CD4-positive, alpha-beta memory T cell (primary cell): ENCODE measurements at regions of chr4 and their contacts with region 1.

Region 1: DNA sequence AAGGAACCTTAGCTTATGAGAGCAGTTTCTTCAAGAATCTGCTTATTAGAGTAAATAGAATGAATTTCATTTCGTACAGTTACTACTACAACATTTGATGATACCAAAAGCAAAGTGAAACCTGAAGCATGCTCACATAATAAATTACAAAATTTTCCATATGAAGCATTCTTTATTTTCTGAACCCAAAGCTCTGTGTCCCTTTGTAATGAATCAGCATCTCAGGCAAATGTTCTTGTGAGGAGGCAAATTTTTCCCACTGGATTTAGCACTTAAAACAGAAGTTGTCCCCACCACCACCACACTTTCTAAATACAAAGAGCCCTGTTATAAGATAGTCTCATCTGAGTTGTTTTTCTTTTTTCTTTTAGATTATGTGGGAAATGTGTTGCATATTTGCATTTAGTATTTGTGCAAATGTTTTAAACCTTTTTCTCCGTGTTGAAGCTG is 70.7 kb upstream of the NFKB1 start:
- DNase-seq: no peak
- H3K4me3 ChIP-seq: peak overlapping the region; percentile 53 to 63
- H3K4me3 Mint-ChIP-seq: peak overlapping the region; percentile 85 to 92 (median 90)
- H3K27ac ChIP-seq: peak overlapping the region; percentile 49
- H3K27ac Mint-ChIP-seq: peak overlapping the region in 6 of 7 donors; percentile 77 to 95 (median 90)
- H3K4me1 ChIP-seq: peaks cover 5% of the 10 kb centered on the region
- H3K4me1 Mint-ChIP-seq: peaks cover 3 to 7% (median 4%) of the 10 kb centered on the region in 4 donors
- H3K27me3 ChIP-seq: no peaks in the 10 kb centered on the region
- H3K27me3 Mint-ChIP-seq: no peaks in the 10 kb centered on the region

Region 2: DNA sequence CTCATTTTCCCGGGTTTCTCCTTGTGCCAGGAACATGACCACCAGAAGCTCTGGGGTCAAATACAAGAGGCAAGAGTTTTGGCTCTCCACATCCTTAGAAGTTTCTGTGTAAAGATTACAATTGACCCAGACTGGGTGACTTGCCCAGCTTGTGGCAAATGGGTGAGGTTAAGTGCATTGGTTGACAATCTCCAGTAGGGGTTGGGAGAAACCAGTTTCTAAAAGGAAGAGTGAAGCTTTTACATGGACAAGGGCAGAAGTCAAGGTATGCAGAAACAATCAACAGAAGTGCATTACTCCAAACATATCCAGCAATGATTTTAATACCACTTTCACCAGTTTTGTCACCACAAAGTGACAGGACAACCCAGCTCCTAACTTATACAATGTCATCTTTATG is 175.0 kb before region 1 on chr4:
- CTCF ChIA-PET with region 1: interaction called, 4 read pairs
- POLR2A ChIA-PET with region 1: no interaction called
- intact Hi-C with region 1: loop called (anchors 1 kb)
- DNase-seq: no peak
- H3K4me3 ChIP-seq: no peak overlapping the region
- H3K4me3 Mint-ChIP-seq: no peak overlapping the region
- H3K27ac ChIP-seq: no peak overlapping the region
- H3K27ac Mint-ChIP-seq: no peak overlapping the region
- H3K4me1 ChIP-seq: no peaks in the 10 kb centered on the region
- H3K4me1 Mint-ChIP-seq: no peaks in the 10 kb centered on the region
- H3K27me3 ChIP-seq: no peaks in the 10 kb centered on the region
- H3K27me3 Mint-ChIP-seq: no peaks in the 10 kb centered on the region

Region 3: DNA sequence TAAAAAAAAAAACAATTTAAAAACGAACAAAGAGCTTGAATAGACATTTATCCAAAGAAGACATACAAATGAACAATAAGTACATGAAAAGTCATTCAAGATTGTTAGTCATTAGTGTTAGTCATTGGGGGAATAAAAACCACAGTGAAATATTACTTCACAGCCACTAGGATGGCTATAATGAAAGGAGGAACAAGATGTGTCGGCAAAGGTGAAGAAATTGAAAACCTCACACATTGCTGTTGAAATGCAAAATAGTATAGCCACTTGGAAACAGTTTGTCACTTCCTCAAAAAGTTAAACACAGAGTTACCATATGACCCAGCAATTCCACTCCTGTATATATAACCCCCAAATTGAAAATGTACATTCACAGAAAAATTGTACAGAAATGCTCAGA is 40.0 kb before region 1 on chr4:
- CTCF ChIA-PET with region 1: no interaction called
- POLR2A ChIA-PET with region 1: no interaction called
- intact Hi-C with region 1: no loop called
- DNase-seq: no peak
- H3K4me3 ChIP-seq: no peak overlapping the region
- H3K4me3 Mint-ChIP-seq: no peak overlapping the region
- H3K27ac ChIP-seq: no peak overlapping the region
- H3K27ac Mint-ChIP-seq: no peak overlapping the region
- H3K4me1 ChIP-seq: no peaks in the 10 kb centered on the region
- H3K4me1 Mint-ChIP-seq: no peaks in the 10 kb centered on the region
- H3K27me3 ChIP-seq: no peaks in the 10 kb centered on the region
- H3K27me3 Mint-ChIP-seq: peaks cover 8 to 15% of the 10 kb centered on the region in 2 donors

Region 4: GRCh38 chr4:102416223-102416622 is 14.3 kb before region 1 on chr4:
- CTCF ChIA-PET with region 1: interaction called, 10 read pairs
- POLR2A ChIA-PET with region 1: no interaction called
- intact Hi-C with region 1: no loop called
- DNase-seq: no peak
- H3K4me3 ChIP-seq: no peak overlapping the region
- H3K4me3 Mint-ChIP-seq: no peak overlapping the region
- H3K27ac ChIP-seq: no peak overlapping the region
- H3K27ac Mint-ChIP-seq: no peak overlapping the region
- H3K4me1 ChIP-seq: no peaks in the 10 kb centered on the region
- H3K4me1 Mint-ChIP-seq: no peaks in the 10 kb centered on the region
- H3K27me3 ChIP-seq: no peaks in the 10 kb centered on the region
- H3K27me3 Mint-ChIP-seq: no peaks in the 10 kb centered on the region

Region 5: DNA sequence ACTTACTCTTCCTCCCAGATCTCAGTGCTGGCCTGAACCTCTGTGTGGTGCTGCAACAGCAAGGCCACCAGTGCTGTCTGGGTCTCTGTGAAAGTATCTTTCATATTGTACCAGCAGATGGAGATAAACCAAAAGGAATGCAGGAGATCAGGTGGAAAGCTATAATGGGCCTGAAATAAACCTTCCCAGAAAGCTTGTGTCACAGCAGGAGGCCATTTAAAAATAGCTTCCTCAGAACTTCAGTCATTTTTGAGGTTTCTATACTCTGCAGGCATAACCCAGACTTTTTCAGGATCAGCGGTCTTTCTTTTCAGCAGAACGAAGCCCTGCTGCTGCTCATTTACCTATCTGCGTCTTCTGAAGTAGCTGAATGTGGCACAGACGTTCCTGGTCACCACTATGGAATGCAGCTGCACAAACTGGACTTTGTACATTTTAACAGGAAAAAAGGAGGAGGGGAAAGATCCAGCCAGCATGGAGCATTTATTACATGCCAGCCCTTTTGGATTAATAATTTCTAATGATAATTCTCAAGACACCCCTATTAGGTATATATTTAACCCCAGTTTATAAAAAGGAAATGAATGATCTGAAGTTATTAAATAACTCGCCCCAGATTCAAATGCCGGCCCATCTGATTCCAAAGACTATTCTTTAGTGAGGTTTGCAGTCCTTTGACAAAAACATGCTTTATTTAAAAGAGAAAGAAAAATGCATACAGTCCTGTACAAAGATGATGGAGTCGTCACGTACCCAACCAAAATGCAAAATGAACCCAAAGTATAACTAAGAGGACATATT is 190.4 kb after region 1 on chr4:
- CTCF ChIA-PET with region 1: interaction called, 19 read pairs
- POLR2A ChIA-PET with region 1: no interaction called
- intact Hi-C with region 1: loop called (anchors 1 kb)
- DNase-seq: peak in 2 of 5 donors; percentile 27 to 35
- H3K4me3 ChIP-seq: no peak overlapping the region
- H3K4me3 Mint-ChIP-seq: peak overlapping the region in 1 of 8 donors; percentile 40
- H3K27ac ChIP-seq: no peak overlapping the region
- H3K27ac Mint-ChIP-seq: peak overlapping the region in 5 of 7 donors; percentile 20 to 82 (median 80)
- H3K4me1 ChIP-seq: peaks cover 18% of the 10 kb centered on the region
- H3K4me1 Mint-ChIP-seq: peaks cover 19 to 70% (median 40%) of the 10 kb centered on the region in 4 donors
- H3K27me3 ChIP-seq: no peaks in the 10 kb centered on the region
- H3K27me3 Mint-ChIP-seq: no peaks in the 10 kb centered on the region

Region 6: DNA sequence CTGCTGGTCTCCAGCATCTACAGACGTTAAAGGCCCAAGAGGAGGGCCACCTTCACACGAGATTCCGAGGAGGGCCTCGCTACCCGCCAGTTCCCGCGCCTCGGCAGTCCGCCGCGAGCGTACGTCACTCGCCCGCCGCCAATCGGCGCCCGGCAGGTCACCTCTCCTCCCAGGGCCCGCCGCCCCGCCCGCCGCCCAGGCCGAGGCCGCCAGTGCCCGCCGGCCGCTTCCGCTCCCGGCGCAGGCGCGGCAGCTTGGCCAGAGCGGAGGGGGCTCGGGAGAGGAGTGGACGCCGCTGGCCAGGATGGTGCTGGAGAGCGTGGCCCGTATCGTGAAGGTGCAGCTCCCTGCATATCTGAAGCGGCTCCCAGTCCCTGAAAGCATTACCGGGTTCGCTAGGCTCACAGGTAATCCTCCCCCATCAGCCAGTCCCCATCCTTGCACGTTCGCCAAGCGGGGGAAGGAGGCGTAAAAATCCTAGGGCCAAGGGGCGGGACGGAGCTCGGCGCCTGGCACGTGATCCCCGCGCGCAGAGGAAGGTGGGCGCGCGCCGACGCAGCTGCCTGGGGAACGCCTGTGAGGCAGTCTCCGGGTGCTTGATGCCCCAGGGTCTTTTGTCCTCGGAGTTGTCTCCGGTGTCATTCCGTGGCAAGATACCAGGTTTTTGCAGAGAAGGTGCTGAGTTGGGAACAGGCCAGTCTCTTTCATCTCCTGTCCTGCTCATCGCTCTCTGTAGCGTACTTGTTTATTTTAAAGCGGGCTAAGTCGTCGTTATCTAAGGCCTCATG is 438.5 kb after region 1 on chr4 and contains the start of gene CISD2:
- CTCF ChIA-PET with region 1: no interaction called
- POLR2A ChIA-PET with region 1: no interaction called
- intact Hi-C with region 1: loop called (anchors 2 kb)
- DNase-seq: peak; percentile 92 to 94 (median 92)
- H3K4me3 ChIP-seq: peak within 1 kb of the TSS; percentile 58 to 74
- H3K4me3 Mint-ChIP-seq: peak within 1 kb of the TSS; percentile 91 to 99 (median 95)
- H3K27ac ChIP-seq: peak within 1 kb of the TSS; percentile 91
- H3K27ac Mint-ChIP-seq: peak within 1 kb of the TSS; percentile 95 to 100 (median 99)
- H3K4me1 ChIP-seq: peaks cover 54% of the 10 kb centered on the region
- H3K4me1 Mint-ChIP-seq: peaks cover 39 to 82% (median 50%) of the 10 kb centered on the region in 4 donors
- H3K27me3 ChIP-seq: no peaks in the 10 kb centered on the region
- H3K27me3 Mint-ChIP-seq: no peaks in the 10 kb centered on the region
- total RNA-seq, gene CISD2: 18.5 to 22.0 TPM

Region 7: DNA sequence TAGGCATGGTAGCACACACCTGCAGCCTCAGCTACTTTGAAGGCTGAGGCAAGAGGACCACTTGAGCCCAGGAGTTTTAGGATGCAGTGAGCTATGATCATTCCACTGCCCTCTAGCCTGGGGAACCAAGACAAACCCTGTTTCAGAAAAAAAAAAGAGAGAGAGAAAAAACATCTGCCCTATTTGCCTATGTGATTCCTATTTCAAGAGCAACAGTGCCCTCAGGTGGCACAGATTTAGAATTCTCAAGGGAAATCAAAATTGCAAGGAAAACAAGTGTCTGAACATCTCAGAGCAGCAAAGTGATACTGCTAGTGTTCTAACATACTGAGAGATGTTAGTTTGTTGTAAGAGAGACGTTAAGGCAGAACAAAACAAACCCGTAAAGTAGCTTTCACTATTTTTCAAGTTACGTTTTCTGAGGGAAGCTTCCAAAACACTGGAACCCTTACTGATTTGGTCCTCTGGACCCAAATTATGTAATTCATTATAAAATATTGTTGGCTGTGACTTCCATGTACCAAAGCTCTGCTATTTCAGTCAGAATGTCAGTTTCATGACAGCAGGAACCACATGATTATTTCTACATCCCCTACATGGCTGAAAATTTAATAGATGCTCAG is 661.2 kb after region 1 on chr4:
- CTCF ChIA-PET with region 1: interaction called, 10 read pairs
- POLR2A ChIA-PET with region 1: no interaction called
- intact Hi-C with region 1: no loop called
- DNase-seq: peak; percentile 51 to 66 (median 59)
- H3K4me3 ChIP-seq: no peak overlapping the region
- H3K4me3 Mint-ChIP-seq: no peak overlapping the region
- H3K27ac ChIP-seq: no peak overlapping the region
- H3K27ac Mint-ChIP-seq: peak overlapping the region in 3 of 7 donors; percentile 37 to 73 (median 60)
- H3K4me1 ChIP-seq: peaks cover 12% of the 10 kb centered on the region
- H3K4me1 Mint-ChIP-seq: peaks cover 6 to 20% (median 10%) of the 10 kb centered on the region in 4 donors
- H3K27me3 ChIP-seq: no peaks in the 10 kb centered on the region
- H3K27me3 Mint-ChIP-seq: no peaks in the 10 kb centered on the region